BJ (cell line): ENCODE measurements at regions of chr7 and their contacts with region 1.

Region 1: DNA sequence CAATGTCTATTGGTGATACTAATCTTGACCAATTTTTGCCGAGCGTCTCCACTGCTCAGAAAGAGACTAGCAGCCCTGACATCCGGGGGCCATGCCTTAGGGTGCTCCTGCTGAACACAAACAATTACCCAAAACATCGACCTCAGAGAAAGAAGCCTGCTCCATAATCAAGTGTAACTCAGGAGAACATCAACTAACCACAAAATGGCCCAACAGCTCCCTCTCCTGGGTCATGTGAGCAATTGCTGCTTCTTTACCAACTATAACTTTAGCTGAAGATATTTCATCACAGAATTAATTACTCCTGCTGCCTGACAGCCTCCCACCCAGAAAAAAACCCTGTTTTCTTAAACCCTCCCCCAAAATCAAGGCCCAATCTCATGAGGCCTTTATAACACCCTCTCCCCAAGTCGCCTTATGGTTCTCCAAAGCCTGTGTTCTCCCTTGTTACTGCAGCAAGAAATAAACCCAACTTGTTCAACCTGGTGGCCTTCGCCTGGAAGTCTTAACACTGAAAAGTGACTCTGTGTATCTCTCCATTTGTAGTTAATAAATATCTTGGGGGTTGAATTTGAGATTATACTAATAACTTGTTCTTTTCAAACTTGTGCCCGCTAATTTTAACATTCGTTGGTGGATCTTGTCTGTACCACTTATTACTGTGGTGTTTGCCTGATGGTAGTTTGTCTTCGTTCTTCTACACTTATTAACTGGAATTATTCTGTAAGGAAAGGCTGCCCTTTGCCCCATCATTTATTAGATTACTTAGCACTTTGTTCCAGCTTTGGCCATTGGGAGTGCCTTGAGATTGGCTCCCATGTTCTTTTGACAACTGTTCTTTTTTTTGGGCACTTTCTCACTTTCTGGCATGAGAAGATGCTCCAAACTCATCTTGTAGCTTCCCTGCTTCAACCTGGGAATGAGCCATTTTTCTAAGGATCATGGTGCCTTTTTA is 21.2 kb upstream of the RAMP3 start:
- DNase-seq: peak; percentile 20
- H3K4me3 ChIP-seq: no peak overlapping the region
- H3K27me3 ChIP-seq: peaks cover 2% of the 10 kb centered on the region
- CTCF ChIP-seq: peak; percentile 86

Region 2: GRCh38 chr7:44858161-44858560 is 278.2 kb before region 1 on chr7:
- CTCF ChIA-PET with region 1: interaction called, 55 read pairs
- POLR2A ChIA-PET with region 1: no interaction called
- DNase-seq: no peak
- H3K4me3 ChIP-seq: no peak overlapping the region
- H3K27me3 ChIP-seq: no peaks in the 10 kb centered on the region
- CTCF ChIP-seq: no peak

Region 3: DNA sequence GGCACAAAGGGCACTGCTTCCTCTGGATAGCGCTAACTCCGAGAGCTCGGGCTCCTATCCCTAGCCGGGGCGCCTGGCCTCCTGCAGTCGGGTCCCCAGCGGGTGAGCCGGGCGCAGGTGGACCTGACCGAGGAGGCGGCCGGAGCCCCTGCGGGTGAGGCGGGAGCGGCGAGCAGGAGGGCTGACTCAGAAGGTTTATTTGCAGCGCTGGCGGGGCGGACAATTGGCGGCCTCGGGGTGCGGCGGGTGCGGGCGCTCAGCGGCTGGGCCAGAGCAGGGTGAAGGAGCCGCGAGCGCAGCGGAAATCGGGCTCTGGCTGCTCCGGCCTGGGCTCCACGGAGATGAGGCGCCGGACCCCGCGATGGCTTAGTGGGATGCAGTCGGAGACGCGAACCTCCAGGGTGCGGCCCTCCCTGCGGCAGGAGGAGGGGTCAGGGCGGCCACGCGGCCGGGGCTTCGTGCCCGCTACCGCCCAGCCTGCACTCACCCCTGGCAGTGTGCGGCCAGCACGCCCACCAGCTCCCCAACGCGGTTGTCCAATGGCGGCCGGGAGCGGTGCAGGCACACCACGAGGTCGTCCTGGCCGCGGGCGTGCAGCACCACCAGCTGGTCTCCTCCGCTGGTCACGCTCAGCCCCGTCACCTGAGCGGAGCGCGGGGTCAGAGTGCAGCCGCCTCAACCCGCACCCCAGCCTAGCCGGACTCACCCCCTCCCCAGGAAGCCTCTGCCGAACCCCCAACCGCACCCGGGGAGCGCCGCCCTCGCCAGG is 173.7 kb before region 1 on chr7:
- CTCF ChIA-PET with region 1: interaction called, 143 read pairs
- POLR2A ChIA-PET with region 1: no interaction called
- DNase-seq: no peak
- H3K4me3 ChIP-seq: peak overlapping the region; percentile 38
- H3K27me3 ChIP-seq: peaks cover 3% of the 10 kb centered on the region
- CTCF ChIP-seq: no peak

Region 4: GRCh38 chr7:44973610-44974401 is 162.6 kb before region 1 on chr7:
- CTCF ChIA-PET with region 1: interaction called, 143 read pairs
- POLR2A ChIA-PET with region 1: no interaction called
- DNase-seq: no peak
- H3K4me3 ChIP-seq: no peak overlapping the region
- H3K27me3 ChIP-seq: no peaks in the 10 kb centered on the region
- CTCF ChIP-seq: peak; percentile 73

Region 5: GRCh38 chr7:45111298-45112223 is 24.8 kb before region 1 on chr7 and contains the start of gene TBRG4:
- CTCF ChIA-PET with region 1: interaction called, 15 read pairs
- POLR2A ChIA-PET with region 1: no interaction called
- DNase-seq: peak; percentile 61
- H3K4me3 ChIP-seq: peak within 1 kb of the TSS; percentile 96
- H3K27me3 ChIP-seq: peaks cover 2% of the 10 kb centered on the region
- CTCF ChIP-seq: peak; percentile 51
- polyA plus RNA-seq, gene TBRG4: 55.0 and 75.5 TPM in 2 replicates

Region 6: DNA sequence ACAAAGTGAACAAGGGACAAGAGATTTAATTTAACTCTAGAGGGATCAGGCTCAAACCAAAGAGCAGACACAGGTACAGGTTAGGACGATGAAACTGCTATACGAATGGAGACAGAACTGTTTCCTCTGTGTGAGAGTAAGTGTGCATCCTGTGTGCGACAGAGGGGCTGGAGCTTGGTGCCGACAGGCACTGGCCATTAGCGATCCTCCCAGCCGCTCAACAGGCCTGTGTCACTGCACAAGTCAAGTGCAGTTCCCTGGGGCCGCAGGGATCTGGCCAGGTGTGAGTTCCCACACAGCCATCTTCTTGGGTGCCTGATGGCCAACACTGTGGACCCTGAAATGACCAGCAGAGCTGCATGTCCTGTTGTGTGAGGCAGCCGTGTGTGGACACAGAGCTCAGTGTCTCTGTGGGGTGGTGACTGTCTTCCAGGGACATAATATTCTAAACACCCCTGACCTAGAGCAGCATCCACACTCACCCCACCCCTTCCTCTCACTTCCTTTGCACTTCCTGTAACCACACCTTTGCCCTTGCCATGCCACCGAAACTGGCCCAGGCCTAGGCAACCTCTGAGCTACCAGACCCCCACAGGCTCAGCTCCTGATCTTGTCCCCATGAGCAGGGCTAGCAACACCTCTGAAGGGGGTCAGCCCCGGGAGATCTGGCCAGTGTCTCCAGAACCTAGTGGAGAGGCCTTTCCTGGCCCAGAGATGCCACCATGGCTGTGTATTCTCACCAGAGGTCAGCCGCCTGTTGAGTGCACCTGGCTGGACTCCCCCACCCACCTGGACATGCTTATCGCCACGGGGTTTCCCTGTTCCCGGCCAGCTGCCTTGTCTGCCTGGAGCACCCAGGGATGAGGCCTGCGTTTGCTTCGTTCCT is 13.2 kb before region 1 on chr7:
- CTCF ChIA-PET with region 1: interaction called, 14 read pairs
- POLR2A ChIA-PET with region 1: no interaction called
- DNase-seq: no peak
- H3K4me3 ChIP-seq: no peak overlapping the region
- H3K27me3 ChIP-seq: peaks cover 2% of the 10 kb centered on the region; the same call in 1 of the 2 replicates
- CTCF ChIP-seq: no peak

Region 7: GRCh38 chr7:45146531-45147379 is 10.4 kb after region 1 on chr7:
- CTCF ChIA-PET with region 1: interaction called, 14 read pairs
- POLR2A ChIA-PET with region 1: no interaction called
- DNase-seq: no peak
- H3K4me3 ChIP-seq: no peak overlapping the region
- H3K27me3 ChIP-seq: peaks cover 22% of the 10 kb centered on the region
- CTCF ChIP-seq: no peak

Region 8: DNA sequence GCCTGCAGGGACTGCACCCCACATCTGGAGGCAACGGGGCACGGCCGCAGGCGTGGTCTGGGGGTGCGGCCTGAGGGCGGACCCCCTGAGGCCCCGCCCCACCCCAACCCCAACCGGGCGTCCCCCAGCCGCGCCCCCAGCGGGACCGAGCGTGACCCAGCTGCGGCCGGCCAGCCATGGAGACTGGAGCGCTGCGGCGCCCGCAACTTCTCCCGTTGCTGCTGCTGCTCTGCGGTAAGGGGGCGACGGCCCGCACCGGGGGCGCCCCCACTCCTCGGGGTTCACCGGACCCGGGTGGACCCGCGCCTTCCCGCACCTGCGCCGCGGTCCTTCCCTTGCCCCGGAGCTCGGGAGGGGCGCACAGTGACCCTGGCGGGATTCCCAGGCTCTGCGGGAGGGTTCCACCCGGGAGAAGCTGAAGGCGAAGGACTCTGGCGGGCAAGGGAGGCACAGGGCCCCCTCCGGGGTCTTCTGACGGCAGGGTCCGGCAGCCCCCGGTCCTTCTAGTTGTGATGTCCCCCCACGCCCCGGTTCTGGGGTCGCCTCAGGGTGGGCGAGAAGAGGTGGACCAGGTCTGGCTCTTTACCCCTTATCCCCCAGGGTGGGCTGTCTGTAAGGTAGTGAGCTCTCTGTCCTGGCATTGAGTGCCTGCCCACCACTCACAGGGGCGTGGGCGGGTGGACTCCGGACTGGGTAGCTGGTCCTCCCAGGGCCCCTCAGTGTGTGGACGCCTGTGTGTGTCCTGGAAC is 21.4 kb after region 1 on chr7 and contains the start of gene RAMP3:
- CTCF ChIA-PET with region 1: no interaction called
- POLR2A ChIA-PET with region 1: no interaction called
- DNase-seq: no peak
- H3K4me3 ChIP-seq: no peak within 1 kb of the TSS
- H3K27me3 ChIP-seq: peaks cover 11% of the 10 kb centered on the region
- CTCF ChIP-seq: no peak
- polyA plus RNA-seq, gene RAMP3: not detected in 2 replicates

Region 9: DNA sequence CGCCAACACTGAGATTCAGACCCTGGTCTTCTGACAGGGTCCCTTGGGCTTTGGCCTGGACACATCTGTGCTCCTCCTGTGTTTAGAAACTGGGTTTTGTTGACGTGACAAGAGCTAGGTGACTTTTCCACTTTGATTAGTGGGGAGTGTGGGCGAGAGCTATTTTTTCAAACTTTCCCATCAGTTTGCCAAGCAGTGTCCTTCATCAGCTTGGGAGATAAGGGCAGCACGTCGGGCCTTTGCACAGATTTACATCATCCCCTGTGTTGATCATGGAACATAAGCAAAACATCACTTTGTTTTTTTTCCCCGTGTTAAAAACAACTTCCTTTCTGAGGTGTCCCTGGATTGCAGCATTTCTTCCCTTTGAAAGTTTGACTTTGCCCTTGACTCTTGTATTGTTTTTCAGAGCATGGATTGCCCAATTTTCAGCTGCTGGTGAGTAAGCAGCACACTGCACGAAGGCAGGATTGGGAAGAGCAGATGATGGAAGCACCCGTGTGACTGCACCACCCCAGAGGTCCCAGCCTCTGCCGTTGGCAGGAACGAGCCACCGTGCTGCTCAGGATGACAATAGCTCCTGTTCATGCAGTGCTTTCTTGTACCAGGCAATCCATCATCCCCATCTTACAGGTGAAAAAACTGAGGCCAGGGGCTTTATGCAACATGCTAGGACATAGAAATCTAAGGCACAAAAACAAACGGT is 745.5 kb after region 1 on chr7:
- CTCF ChIA-PET with region 1: no interaction called
- POLR2A ChIA-PET with region 1: no interaction called
- DNase-seq: peak; percentile 50
- H3K4me3 ChIP-seq: no peak overlapping the region
- H3K27me3 ChIP-seq: no peaks in the 10 kb centered on the region
- CTCF ChIP-seq: no peak